ENCODE measurements at regions of chr17 and their contacts with region 1.

Region 1: DNA sequence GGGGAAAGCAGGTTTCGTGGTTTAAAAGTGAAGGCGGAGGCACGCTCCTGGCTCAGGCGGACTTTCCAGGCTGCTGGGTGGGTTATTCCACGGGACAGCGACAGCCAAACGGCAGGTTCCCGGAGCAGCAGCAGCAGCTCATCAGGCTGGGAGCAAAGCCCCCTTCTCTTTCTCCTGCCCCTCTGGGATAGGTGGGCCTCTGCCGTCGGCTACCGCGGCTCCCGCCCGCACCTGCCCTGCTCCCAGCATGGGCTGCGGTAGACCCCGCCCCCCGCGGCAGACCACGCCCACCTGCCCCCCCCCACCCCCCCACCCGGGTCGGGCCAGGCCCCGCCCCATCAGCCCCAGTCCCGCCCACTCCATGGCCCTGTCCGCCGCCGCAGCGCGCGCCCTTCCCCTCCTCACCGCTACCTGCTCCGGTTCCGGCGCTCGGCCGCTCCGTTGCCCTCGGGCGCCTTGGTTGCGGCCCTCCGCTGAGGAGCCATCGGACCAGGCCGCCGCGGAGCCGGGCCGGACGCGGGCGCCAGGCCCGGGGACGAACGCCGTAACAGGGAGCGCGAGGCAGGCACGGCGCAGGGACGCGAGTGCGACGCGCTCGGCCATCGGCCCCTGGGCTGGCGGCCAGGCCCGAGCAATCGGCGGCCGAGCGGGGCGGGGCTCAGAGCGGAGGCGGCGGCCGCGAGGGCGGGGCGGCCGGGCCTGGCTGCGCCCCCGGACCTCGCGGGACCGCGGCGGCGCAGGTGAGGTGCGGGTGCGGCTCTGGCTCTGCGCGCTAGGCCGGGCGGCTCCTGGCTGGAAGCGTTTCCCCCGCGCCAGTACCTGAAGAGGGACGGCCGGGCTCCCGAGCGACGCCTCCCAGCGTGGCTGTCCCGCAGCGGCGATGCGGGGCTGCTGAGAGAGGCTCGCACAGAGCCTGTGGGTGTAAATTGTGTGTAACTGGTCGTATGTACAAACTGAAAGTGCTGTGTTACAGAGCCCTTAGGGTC is at the starts of genes HEXD and OGFOD3:
- DNase-seq: peak; percentile 71
- ATAC-seq: peak; percentile 80
- H3K4me3 ChIP-seq: peak within 1 kb of the TSS; percentile 96 to 100 (median 99)
- H3K27ac ChIP-seq: peak within 1 kb of the TSS; percentile 96
- H3K4me1 ChIP-seq: peaks cover 27% of the 10 kb centered on the region
- H3K27me3 ChIP-seq: no peaks in the 10 kb centered on the region; a peak in 1 of 5 replicates
- CTCF ChIP-seq: peak; percentile 18; the same call in 1 of the 2 replicates
- EP300 ChIP-seq: peak in 1 of 2 experiments; percentile 28; a peak in 1 of 4 replicates
- POLR2A ChIP-seq: peak; percentile 80 to 85
- RAD21 ChIP-seq: peak; percentile 84
- total RNA-seq, gene HEXD: 12.4 and 22.3 TPM in 2 replicates
- total RNA-seq, gene OGFOD3: 19.3 and 42.1 TPM in 2 replicates

Region 2: DNA sequence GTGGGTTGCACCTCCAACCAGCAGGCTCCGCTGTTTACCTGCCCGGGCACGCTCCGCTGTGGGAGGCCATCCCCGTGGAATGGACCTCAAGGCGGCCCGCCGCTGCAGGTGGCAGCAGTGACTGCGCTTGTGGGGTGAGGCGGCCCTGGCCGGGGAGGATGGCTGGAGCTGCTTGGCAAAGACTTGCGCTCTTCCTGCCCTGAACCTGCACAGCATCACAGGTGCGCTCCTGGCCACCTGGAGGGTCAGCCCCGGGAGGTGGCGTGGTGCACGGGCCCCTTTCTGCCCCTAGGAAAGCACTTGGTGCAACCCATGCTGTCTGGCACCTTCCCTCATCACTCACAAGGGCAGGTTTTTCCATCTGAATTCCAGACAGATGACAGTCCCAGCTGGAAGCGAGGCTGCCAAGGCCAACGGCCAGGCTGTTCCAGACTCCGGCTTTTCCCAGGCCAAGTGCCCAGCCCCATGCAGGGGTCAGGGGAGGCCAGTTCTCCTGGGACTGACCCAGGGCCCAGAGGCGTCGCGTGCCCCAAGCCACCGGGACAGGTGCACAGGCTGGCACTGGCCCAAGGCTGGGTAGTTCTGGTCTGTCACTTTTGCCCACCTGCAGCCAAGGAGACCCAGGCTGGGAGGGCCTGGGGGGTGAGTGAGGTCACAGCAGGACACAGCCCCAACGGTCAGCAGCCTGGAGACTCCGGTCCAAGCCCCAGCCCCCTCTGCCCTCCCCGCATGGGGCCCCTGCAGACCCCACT is 33.4 kb before region 1 on chr17:
- CTCF ChIA-PET with region 1: no interaction called
- POLR2A ChIA-PET with region 1: interaction called, 4 read pairs
- in situ Hi-C with region 1: no loop called
- intact Hi-C with region 1: loop called (anchors 2 kb)
- DNase-seq: peak; percentile 74
- ATAC-seq: peak; percentile 76
- H3K4me3 ChIP-seq: peak overlapping the region in 1 of 3 experiments; percentile 41; a peak in 1 of 6 replicates
- H3K27ac ChIP-seq: no peak overlapping the region
- H3K4me1 ChIP-seq: peaks cover 49% of the 10 kb centered on the region
- H3K27me3 ChIP-seq: peaks cover 8 to 40% of the 10 kb centered on the region in 2 experiments; a peak in 3 of 5 replicates
- CTCF ChIP-seq: peak; percentile 74
- EP300 ChIP-seq: peak in 1 of 2 experiments; percentile 42; a peak in 2 of 4 replicates
- POLR2A ChIP-seq: no peak
- RAD21 ChIP-seq: peak; percentile 39; the same call in 1 of the 2 replicates

Region 3: DNA sequence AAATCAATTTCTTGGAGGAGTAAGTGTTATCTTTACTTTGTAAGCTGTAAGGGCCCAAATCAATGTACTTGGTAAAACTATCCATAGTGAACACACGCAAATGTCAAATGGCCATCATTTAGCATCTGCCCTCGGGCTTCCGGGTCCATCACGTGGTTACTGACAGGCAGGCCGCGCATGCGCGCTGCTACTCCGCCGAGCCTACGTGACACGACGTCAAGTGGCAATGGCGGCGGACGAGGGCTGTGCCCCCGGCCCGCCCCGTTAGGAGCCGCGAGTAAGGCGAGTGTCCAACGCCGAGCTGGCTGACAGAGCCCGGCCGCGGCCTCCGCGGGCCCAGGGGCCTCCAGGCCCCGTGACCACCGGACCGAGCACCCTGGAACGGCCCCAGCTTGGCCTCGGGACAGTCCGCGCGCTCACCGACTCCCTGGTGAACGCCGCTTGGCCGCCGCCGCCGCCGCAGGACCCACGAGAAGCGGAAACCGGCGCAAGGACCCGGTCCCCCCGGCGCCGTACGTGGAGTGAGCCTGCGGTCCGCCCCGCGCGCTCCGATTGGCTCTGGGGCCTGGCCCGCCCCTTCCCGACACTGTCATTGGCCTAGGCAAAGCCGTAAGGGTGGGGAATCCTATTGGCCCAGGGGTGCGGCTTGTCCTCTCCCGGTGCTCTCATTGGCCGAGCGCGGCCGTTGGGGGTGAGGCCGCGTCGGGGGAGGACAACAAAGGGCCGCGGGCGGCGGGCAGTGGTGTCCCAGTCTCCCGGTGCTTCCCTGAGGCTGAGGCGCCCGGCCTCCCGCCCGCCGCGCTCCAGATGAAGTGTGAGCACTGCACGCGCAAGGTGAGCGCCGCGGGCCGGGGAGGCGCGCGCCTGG is 39.9 kb after region 1 on chr17 and contains the start of gene NARF:
- CTCF ChIA-PET with region 1: no interaction called
- POLR2A ChIA-PET with region 1: interaction called, 3 read pairs
- in situ Hi-C with region 1: no loop called
- intact Hi-C with region 1: loop called (anchors 1 kb)
- DNase-seq: peak; percentile 99
- ATAC-seq: peak; percentile 96
- H3K4me3 ChIP-seq: peak within 1 kb of the TSS; percentile 85 to 99 (median 87)
- H3K27ac ChIP-seq: peak within 1 kb of the TSS; percentile 96
- H3K4me1 ChIP-seq: peaks cover 56% of the 10 kb centered on the region
- H3K27me3 ChIP-seq: no peaks in the 10 kb centered on the region
- CTCF ChIP-seq: no peak
- EP300 ChIP-seq: peak in 1 of 2 experiments; percentile 9; a peak in 2 of 4 replicates
- POLR2A ChIP-seq: peak; percentile 91 to 96
- RAD21 ChIP-seq: peak; percentile 84
- total RNA-seq, gene NARF: 61.1 and 69.8 TPM in 2 replicates

Region 4: GRCh38 chr17:82559566-82560251 is 141.4 kb after region 1 on chr17:
- CTCF ChIA-PET with region 1: no interaction called
- POLR2A ChIA-PET with region 1: no interaction called
- in situ Hi-C with region 1: no loop called
- intact Hi-C with region 1: no loop called
- DNase-seq: peak; percentile 25
- ATAC-seq: 0 out of 3 replicates have a peak, but pooled peaks have one; percentile 3
- H3K4me3 ChIP-seq: no peak overlapping the region
- H3K27ac ChIP-seq: peak overlapping the region; percentile 15
- H3K4me1 ChIP-seq: peaks cover 79% of the 10 kb centered on the region
- H3K27me3 ChIP-seq: no peaks in the 10 kb centered on the region
- CTCF ChIP-seq: no peak
- EP300 ChIP-seq: no peak
- POLR2A ChIP-seq: no peak
- RAD21 ChIP-seq: no peak

Measured in HepG2 (cell line).